Activated naive CD4-positive, alpha-beta T cell treated with anti-CD3 and anti-CD28 coated beads for 36 hours (primary cell): ENCODE measurements at regions of chr13 and their contacts with region 1.

Region 1: GRCh38 chr13:45623515-45624090 is 8.1 kb upstream of the ERICH6B start:
- DNase-seq: no peak
- H3K4me3 Mint-ChIP-seq: no peak overlapping the region
- H3K27ac Mint-ChIP-seq: no peak overlapping the region
- H3K4me1 Mint-ChIP-seq: no peaks in the 10 kb centered on the region
- H3K27me3 Mint-ChIP-seq: peaks cover 32% of the 10 kb centered on the region

Region 2: GRCh38 chr13:45040622-45041021 is 583.0 kb before region 1 on chr13:
- CTCF ChIA-PET with region 1: no interaction called
- intact Hi-C with region 1: no loop called
- DNase-seq: no peak
- H3K4me3 Mint-ChIP-seq: no peak overlapping the region
- H3K27ac Mint-ChIP-seq: no peak overlapping the region
- H3K4me1 Mint-ChIP-seq: no peaks in the 10 kb centered on the region
- H3K27me3 Mint-ChIP-seq: peaks cover 4% of the 10 kb centered on the region

Region 3: DNA sequence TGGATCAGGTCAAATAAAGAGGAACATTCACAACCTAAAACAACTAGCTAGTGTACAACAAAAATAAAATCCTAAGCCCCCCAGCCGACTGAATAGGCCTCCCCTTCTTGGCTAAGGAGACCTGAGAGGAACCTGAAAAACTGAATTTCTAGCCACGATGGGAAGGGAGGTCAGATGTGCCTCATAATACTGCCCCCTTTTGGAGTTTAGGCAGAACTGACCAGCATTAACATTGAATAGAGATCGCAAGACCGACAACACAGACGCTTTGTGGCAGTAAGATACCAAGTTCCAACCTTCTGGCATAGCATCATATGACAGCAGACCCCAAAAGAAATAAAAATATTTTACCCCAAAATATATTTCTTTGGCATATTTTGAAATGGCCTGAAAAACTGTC is 94.5 kb after region 1 on chr13:
- CTCF ChIA-PET with region 1: interaction called, 15 read pairs
- intact Hi-C with region 1: loop called (anchors 1 kb)
- DNase-seq: peak; percentile 10
- H3K4me3 Mint-ChIP-seq: no peak overlapping the region
- H3K27ac Mint-ChIP-seq: no peak overlapping the region
- H3K4me1 Mint-ChIP-seq: no peaks in the 10 kb centered on the region
- H3K27me3 Mint-ChIP-seq: no peaks in the 10 kb centered on the region

Region 4: DNA sequence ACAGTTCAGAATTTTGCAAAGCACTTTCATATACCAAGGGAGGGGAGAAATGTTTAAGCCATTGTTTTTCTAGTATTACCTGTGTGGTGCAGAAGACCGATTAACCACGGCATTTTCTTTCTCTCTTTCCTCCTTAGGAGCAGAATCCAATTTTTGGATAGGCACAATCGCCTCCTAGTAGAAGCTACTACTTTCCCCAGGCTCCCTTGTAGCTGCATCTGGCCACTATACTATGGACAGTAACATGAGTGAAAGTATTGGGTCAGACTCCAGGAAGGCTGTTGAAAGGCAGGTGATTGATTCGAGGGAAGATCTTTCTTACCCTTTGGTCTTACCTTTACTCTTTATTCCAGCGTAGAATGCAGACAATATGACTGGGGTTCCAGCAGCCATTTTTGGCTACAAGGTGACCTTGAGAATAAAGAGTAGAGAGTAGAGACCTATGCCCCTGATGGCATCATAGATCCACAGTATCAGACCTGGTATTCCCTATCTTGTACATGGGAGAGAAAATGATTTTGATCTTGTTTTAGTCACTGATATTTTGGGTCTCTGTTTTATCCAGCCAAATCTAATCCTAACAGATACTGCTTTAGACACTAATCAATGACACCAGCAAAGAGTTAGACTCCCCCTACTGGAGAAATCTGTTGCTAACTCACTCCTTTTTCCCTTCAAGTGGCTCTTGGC is 665.1 kb after region 1 on chr13:
- CTCF ChIA-PET with region 1: no interaction called
- intact Hi-C with region 1: loop called (anchors 1 kb)
- DNase-seq: no peak
- H3K4me3 Mint-ChIP-seq: no peak overlapping the region
- H3K27ac Mint-ChIP-seq: no peak overlapping the region
- H3K4me1 Mint-ChIP-seq: peaks cover 17% of the 10 kb centered on the region
- H3K27me3 Mint-ChIP-seq: no peaks in the 10 kb centered on the region

Region 5: GRCh38 chr13:46463719-46464118 is 840.1 kb after region 1 on chr13:
- CTCF ChIA-PET with region 1: no interaction called
- intact Hi-C with region 1: loop called (anchors 10 kb)
- DNase-seq: no peak
- H3K4me3 Mint-ChIP-seq: no peak overlapping the region
- H3K27ac Mint-ChIP-seq: no peak overlapping the region
- H3K4me1 Mint-ChIP-seq: no peaks in the 10 kb centered on the region
- H3K27me3 Mint-ChIP-seq: no peaks in the 10 kb centered on the region